CD4-positive, alpha-beta T cell (primary cell): ENCODE measurements at regions of chr15 and their contacts with region 1.

Region 1: GRCh38 chr15:98442379-98442833 is 205.9 kb upstream of the IGF1R start:
- DNase-seq: peak in 12 of 14 experiments; percentile 19 to 69 (median 41)
- ATAC-seq: peak; percentile 79
- H3K4me3 ChIP-seq: no peak overlapping the region
- H3K4me3 Mint-ChIP-seq: no peak overlapping the region
- H3K27ac ChIP-seq: no peak overlapping the region
- H3K27ac Mint-ChIP-seq: no peak overlapping the region
- H3K4me1 ChIP-seq: no peaks in the 10 kb centered on the region
- H3K4me1 Mint-ChIP-seq: no peaks in the 10 kb centered on the region
- H3K27me3 ChIP-seq: no peaks in the 10 kb centered on the region
- H3K27me3 Mint-ChIP-seq: peaks cover 28% of the 10 kb centered on the region
- CTCF ChIP-seq: peak; percentile 71

Region 2: DNA sequence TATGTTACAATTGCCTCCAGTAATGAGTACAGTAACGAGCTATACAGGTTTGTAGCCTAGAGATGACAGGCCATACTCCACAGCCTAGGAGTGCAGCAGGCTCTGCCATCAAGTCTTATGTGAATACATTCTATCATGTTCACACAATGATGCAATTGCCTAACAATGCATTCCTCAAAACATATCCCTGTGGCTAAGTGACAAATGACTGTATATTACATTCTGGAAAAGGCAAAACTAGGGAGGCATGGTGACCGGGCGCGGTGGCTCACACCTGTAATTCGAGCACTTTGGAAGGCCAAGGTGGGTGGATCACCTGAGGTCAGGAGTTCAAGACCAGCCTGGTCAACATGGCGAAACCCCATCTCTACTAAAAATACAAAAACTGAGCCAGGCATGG is 13.6 kb after region 1 on chr15:
- CTCF ChIA-PET with region 1: no interaction called
- POLR2A ChIA-PET with region 1: no interaction called
- intact Hi-C with region 1: no loop called
- DNase-seq: no peak
- ATAC-seq: no peak
- H3K4me3 ChIP-seq: no peak overlapping the region
- H3K4me3 Mint-ChIP-seq: no peak overlapping the region
- H3K27ac ChIP-seq: no peak overlapping the region
- H3K27ac Mint-ChIP-seq: no peak overlapping the region
- H3K4me1 ChIP-seq: no peaks in the 10 kb centered on the region
- H3K4me1 Mint-ChIP-seq: no peaks in the 10 kb centered on the region
- H3K27me3 ChIP-seq: no peaks in the 10 kb centered on the region
- H3K27me3 Mint-ChIP-seq: peaks cover 43% of the 10 kb centered on the region
- CTCF ChIP-seq: no peak

Region 3: DNA sequence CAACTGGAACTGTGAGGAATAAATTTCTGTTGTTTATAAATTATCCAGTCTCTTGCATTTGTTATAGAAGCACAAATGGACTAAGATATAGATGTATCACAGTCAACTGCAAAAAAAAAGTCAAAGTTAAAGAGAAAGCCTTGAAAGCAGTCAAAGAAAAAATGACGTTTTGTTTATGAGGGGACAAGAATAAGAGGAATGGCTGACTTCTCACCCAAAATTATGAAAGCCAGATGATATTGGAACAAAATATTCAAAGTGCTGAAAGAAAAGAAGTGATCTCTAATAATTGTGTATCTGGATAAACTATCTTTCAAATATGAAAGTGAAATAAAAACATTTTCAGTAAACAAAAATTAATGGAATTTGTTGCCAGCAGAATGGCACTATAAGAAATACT is 34.2 kb after region 1 on chr15:
- CTCF ChIA-PET with region 1: no interaction called
- POLR2A ChIA-PET with region 1: no interaction called
- intact Hi-C with region 1: no loop called
- DNase-seq: no peak
- ATAC-seq: no peak
- H3K4me3 ChIP-seq: no peak overlapping the region
- H3K4me3 Mint-ChIP-seq: no peak overlapping the region
- H3K27ac ChIP-seq: no peak overlapping the region
- H3K27ac Mint-ChIP-seq: no peak overlapping the region
- H3K4me1 ChIP-seq: no peaks in the 10 kb centered on the region
- H3K4me1 Mint-ChIP-seq: no peaks in the 10 kb centered on the region
- H3K27me3 ChIP-seq: peaks cover 4 to 7% of the 10 kb centered on the region in 2 experiments
- H3K27me3 Mint-ChIP-seq: peaks cover 24% of the 10 kb centered on the region
- CTCF ChIP-seq: no peak

Region 4: GRCh38 chr15:98560338-98560737 is 117.9 kb after region 1 on chr15:
- CTCF ChIA-PET with region 1: no interaction called
- POLR2A ChIA-PET with region 1: no interaction called
- intact Hi-C with region 1: no loop called
- DNase-seq: no peak
- ATAC-seq: no peak
- H3K4me3 ChIP-seq: no peak overlapping the region
- H3K4me3 Mint-ChIP-seq: no peak overlapping the region
- H3K27ac ChIP-seq: no peak overlapping the region
- H3K27ac Mint-ChIP-seq: no peak overlapping the region
- H3K4me1 ChIP-seq: no peaks in the 10 kb centered on the region
- H3K4me1 Mint-ChIP-seq: no peaks in the 10 kb centered on the region
- H3K27me3 ChIP-seq: no peaks in the 10 kb centered on the region
- H3K27me3 Mint-ChIP-seq: no peaks in the 10 kb centered on the region
- CTCF ChIP-seq: no peak

Region 5: GRCh38 chr15:98658831-98659699 is 216.7 kb after region 1 on chr15:
- CTCF ChIA-PET with region 1: no interaction called
- POLR2A ChIA-PET with region 1: no interaction called
- intact Hi-C with region 1: loop called (anchors 2 kb)
- DNase-seq: peak in 7 of 14 experiments; percentile 10 to 73 (median 52)
- ATAC-seq: peak; percentile 81
- H3K4me3 ChIP-seq: no peak overlapping the region
- H3K4me3 Mint-ChIP-seq: no peak overlapping the region
- H3K27ac ChIP-seq: no peak overlapping the region
- H3K27ac Mint-ChIP-seq: no peak overlapping the region
- H3K4me1 ChIP-seq: peaks cover 9% of the 10 kb centered on the region
- H3K4me1 Mint-ChIP-seq: peaks cover 56% of the 10 kb centered on the region
- H3K27me3 ChIP-seq: no peaks in the 10 kb centered on the region
- H3K27me3 Mint-ChIP-seq: no peaks in the 10 kb centered on the region
- CTCF ChIP-seq: peak; percentile 95

Region 6: GRCh38 chr15:98881526-98882520 is 439.4 kb after region 1 on chr15:
- CTCF ChIA-PET with region 1: no interaction called
- POLR2A ChIA-PET with region 1: no interaction called
- intact Hi-C with region 1: loop called in 1 of 2 experiments (anchors 1 kb)
- DNase-seq: peak in 4 of 14 experiments; percentile 8 to 66 (median 55)
- ATAC-seq: no peak
- H3K4me3 ChIP-seq: no peak overlapping the region
- H3K4me3 Mint-ChIP-seq: no peak overlapping the region
- H3K27ac ChIP-seq: no peak overlapping the region
- H3K27ac Mint-ChIP-seq: peak overlapping the region; percentile 9
- H3K4me1 ChIP-seq: no peaks in the 10 kb centered on the region
- H3K4me1 Mint-ChIP-seq: peaks cover 27% of the 10 kb centered on the region
- H3K27me3 ChIP-seq: no peaks in the 10 kb centered on the region
- H3K27me3 Mint-ChIP-seq: no peaks in the 10 kb centered on the region
- CTCF ChIP-seq: peak; percentile 79

Region 7: GRCh38 chr15:99059010-99059981 is 616.9 kb after region 1 on chr15:
- CTCF ChIA-PET with region 1: no interaction called
- POLR2A ChIA-PET with region 1: no interaction called
- intact Hi-C with region 1: loop called in 1 of 2 experiments (anchors 5 kb)
- DNase-seq: peak in 13 of 14 experiments; percentile 6 to 75 (median 30)
- ATAC-seq: peak; percentile 71
- H3K4me3 ChIP-seq: peak overlapping the region; percentile 45
- H3K4me3 Mint-ChIP-seq: peak overlapping the region; percentile 73
- H3K27ac ChIP-seq: no peak overlapping the region
- H3K27ac Mint-ChIP-seq: no peak overlapping the region
- H3K4me1 ChIP-seq: peaks cover 15% of the 10 kb centered on the region
- H3K4me1 Mint-ChIP-seq: no peaks in the 10 kb centered on the region
- H3K27me3 ChIP-seq: peaks cover 17 to 58% of the 10 kb centered on the region in 2 experiments
- H3K27me3 Mint-ChIP-seq: peaks cover 57% of the 10 kb centered on the region
- CTCF ChIP-seq: peak; percentile 45

Region 8: DNA sequence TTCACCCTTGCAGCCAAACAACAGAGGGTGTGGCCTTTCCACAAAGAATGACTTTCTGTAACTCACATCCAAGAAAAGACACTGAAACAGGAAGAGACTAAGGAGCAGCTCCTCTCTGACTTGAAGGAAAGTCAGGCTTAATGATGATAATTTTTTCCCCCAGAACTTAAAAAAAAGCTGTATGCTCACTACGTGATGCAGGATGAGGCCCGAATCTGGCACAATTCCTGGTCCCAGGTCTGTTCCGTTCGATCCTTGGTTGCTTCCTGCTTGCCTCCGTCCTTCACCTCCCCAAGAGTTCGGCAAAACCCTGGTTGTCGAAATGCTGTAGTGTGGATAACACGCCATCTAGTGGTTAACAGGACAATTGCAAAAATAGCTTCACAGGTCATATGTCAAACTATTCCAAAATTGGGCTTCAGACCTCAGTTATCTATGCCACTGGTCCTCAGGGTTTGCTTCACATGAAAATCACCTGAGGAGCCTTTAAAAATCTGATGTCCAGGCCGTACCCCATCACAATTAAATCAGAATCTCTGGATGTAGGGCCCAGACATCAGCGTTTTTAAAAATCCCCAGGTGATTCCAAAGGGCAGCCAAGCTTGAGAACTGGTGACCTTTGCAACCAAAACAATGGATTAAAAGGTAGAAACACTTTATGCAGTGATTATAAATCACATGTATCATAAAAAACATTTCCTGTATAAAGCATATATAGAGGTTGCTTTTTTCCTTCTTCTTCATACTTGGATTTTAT is 634.3 kb after region 1 on chr15:
- CTCF ChIA-PET with region 1: no interaction called
- POLR2A ChIA-PET with region 1: no interaction called
- intact Hi-C with region 1: loop called (anchors 1 kb)
- DNase-seq: peak in 11 of 14 experiments; percentile 6 to 77 (median 19)
- ATAC-seq: peak; percentile 76
- H3K4me3 ChIP-seq: peak overlapping the region; percentile 46
- H3K4me3 Mint-ChIP-seq: peak overlapping the region; percentile 82
- H3K27ac ChIP-seq: no peak overlapping the region
- H3K27ac Mint-ChIP-seq: no peak overlapping the region
- H3K4me1 ChIP-seq: peaks cover 4% of the 10 kb centered on the region
- H3K4me1 Mint-ChIP-seq: peaks cover 6% of the 10 kb centered on the region
- H3K27me3 ChIP-seq: no peaks in the 10 kb centered on the region
- H3K27me3 Mint-ChIP-seq: peaks cover 10% of the 10 kb centered on the region
- CTCF ChIP-seq: peak; percentile 87

Region 9: GRCh38 chr15:99213187-99213811 is 770.9 kb after region 1 on chr15:
- CTCF ChIA-PET with region 1: no interaction called
- POLR2A ChIA-PET with region 1: no interaction called
- intact Hi-C with region 1: loop called in 1 of 2 experiments (anchors 10 kb)
- DNase-seq: peak; percentile 15 to 64 (median 48)
- ATAC-seq: no peak
- H3K4me3 ChIP-seq: no peak overlapping the region
- H3K4me3 Mint-ChIP-seq: no peak overlapping the region
- H3K27ac ChIP-seq: no peak overlapping the region
- H3K27ac Mint-ChIP-seq: no peak overlapping the region
- H3K4me1 ChIP-seq: no peaks in the 10 kb centered on the region
- H3K4me1 Mint-ChIP-seq: no peaks in the 10 kb centered on the region
- H3K27me3 ChIP-seq: no peaks in the 10 kb centered on the region
- H3K27me3 Mint-ChIP-seq: no peaks in the 10 kb centered on the region
- CTCF ChIP-seq: peak; percentile 81